GM18951 (cell line): ENCODE measurements at regions of chrX and their contacts with region 1.

Region 1: DNA sequence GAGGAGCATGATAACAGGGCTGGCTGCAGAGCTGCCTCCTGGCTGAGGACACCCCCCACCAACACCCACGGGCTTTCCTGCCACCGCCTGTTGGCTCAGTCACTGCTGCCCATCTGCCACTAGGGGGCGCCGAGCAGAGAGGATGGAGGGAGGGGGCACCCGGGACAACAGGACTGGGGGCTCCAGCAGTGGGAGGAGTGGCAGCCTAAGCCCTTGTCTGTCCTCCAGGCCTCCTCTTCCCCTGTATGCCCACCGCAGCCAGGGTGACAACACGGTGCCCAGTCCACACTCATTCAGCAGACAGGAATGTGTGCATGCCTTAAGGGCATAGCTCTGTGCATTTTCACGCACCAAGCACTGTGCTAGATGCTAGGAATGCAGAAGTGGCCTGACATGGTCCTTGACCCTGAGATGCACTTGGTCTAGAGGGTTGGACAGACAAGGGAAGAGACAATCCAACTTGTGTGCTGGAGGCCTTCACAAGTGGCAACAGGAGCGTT is 149.9 kb downstream of the AMMECR1 start:
- POLR2A ChIP-seq: no peak

Region 2: GRCh38 chrX:108834036-108834435 is 1334.0 kb before region 1 on chrX:
- in situ Hi-C with region 1: no loop called
- POLR2A ChIP-seq: no peak

Region 3: DNA sequence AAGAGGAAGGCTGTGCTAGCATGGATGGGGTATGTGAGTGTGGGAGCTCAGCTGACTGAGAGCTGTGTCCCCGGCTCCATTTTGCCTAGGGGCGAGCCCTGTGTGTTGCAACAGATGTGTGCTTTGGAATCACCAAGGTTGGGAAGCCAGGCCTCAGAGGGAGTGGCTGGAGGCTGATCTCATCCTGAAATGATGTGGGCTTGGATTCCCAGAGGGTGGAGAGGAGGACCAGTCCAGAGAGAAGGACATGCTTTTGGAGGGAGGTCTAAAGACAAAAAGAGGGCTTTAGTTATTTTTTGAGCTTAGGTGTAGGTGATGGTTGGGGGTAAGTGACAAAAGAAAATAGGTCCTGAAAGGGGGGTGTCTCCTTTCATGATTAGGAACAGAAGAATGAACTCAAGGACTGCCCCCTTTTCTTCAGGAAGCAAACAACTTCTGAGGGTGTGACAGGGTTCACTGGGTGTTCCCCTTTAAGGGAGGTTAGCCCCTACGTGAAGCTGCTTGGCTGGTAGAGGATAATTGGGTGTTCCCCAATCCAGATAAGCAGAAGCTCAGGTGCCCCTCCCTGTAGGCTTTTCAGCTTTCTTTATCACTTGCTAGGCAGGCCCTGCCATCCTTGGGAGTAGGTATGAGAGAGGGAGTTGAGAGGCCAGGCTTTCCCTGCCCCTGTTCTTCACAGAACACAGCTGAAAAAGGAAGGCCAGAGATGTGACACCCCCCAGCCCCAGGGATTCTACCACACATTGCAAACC is 234.7 kb after region 1 on chrX:
- in situ Hi-C with region 1: loop called (anchors 5 kb)
- POLR2A ChIP-seq: no peak

Region 4: GRCh38 chrX:110847334-110847733 is 679.3 kb after region 1 on chrX:
- in situ Hi-C with region 1: loop called (anchors 25 kb)
- POLR2A ChIP-seq: no peak